ENCODE measurements at regions of chr2 and their contacts with region 1.

Region 1: DNA sequence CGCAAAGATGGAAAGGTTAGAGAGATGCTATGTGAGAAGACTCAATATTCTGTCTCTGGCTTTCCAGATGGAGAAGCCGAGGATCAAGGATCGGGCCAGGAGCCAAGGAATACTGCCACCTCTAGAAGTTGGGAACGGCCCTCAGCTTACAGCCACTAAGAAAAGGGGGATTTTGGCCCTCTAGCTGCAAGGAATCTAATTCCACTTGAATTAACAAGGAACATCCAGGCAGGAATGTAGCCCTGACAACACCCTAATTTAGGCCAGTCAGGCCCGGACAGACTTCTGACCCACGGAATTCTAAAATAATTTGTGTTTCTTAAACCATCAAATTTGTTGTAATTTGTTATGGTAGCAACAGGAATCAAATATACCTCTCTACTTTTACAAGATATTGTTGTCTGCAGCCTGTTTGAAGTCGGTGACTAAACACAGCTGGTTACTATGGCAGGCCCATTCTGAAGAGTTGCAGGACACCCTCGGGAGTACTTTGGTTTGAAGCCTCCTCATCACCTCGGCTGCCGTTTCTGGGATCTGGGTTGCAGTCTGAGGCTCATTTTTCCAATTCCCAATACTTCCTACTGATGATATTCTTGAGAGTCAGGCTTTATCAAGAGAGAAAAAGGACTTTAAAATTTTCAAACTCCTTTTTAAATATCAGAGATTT is 1131.2 kb downstream of the TSN start:
- DNase-seq: no peak
- H3K4me3 ChIP-seq: no peak overlapping the region
- H3K27ac ChIP-seq: no peak overlapping the region
- H3K4me1 ChIP-seq: no peaks in the 10 kb centered on the region
- H3K27me3 ChIP-seq: no peaks in the 10 kb centered on the region
- CTCF ChIP-seq: no peak

Region 2: GRCh38 chr2:122748552-122749011 is 138.0 kb before region 1 on chr2:
- CTCF ChIA-PET with region 1: no interaction called
- dilution Hi-C with region 1: no loop called
- in situ Hi-C with region 1: no loop called
- intact Hi-C with region 1: no loop called
- DNase-seq: peak; percentile 92
- H3K4me3 ChIP-seq: no peak overlapping the region
- H3K27ac ChIP-seq: peak overlapping the region; percentile 67
- H3K4me1 ChIP-seq: peaks cover 17% of the 10 kb centered on the region
- H3K27me3 ChIP-seq: no peaks in the 10 kb centered on the region
- CTCF ChIP-seq: peak in 1 of 2 donors; percentile 4

Region 3: DNA sequence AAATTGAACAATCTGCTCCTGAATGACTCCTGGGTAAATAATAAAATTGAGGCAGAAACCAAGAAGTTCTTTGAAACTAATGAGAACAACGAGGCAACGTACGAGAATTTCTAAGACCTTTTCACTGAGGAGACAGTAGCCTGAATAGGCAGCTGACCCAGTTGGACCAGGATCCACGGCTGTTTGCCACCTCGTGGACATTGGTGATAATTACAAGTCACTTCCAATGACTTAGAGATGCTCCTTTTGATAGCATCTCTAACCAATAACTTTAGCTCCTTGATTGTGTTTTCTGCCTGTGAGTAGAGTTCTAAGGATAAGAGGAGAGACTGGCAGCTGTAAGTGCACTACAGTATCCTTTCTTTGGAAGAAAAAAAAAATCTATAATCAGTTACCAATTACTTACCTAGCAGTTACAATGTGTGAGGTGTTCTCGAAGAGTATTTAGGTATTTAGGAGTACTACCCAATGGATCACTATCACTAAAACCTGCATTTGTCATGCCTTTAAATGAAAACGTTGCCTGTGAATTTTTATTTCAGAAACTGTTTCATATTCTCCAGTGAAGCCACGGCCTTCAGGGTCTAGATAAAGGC is 1107.2 kb after region 1 on chr2:
- CTCF ChIA-PET with region 1: no interaction called
- dilution Hi-C with region 1: no loop called
- in situ Hi-C with region 1: no loop called
- intact Hi-C with region 1: loop called (anchors 10 kb)
- DNase-seq: peak; percentile 10
- H3K4me3 ChIP-seq: no peak overlapping the region
- H3K27ac ChIP-seq: no peak overlapping the region
- H3K4me1 ChIP-seq: no peaks in the 10 kb centered on the region
- H3K27me3 ChIP-seq: no peaks in the 10 kb centered on the region
- CTCF ChIP-seq: peak; percentile 32 to 53